Posterior cingulate gyrus (tissue), 11 donors: ENCODE measurements at regions of chr20 and their contacts with region 1.

Region 1: DNA sequence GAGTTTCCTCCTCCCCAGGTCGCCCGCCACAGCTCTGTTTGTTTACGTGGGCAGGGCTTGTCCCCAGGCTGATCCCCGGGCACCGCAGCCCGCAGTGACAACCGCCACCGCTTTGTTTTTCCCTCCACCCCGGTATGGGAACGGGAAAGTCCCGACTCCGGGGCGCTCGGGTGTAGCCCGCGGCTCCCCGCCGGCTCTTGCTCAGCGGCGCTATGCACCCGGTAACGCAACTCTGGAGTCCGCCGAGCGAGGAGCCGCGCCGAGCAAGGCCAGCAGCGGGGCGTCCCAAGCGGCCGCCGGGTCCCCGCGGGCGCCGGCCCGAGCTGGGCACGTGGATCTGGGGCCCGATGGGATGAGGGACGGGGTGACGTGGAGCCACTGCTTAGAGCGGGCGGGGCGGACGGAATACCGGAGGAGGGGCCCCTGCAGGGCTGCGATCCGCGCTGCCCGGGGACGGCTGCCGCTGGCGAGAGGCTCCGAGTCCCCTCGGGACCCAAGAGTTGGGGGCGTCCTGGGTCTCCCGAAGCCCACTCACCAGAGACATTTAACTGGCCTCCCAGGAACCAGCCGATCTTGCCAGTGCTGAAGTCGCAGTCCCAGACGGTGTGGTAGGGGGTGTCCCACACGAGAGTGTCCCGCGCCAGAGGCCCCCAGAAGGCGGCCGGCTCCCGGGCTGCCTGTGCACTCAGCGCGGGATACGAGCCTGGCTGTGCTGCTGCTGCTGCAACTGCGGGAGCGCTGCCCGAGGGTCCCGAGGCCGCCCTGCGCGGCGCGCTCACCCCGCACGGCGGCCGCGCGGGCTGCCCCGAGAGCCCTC is 497 bp downstream of the ACSS1 start:
- DNase-seq: peak; percentile 59 to 95 (median 70)

Region 2: DNA sequence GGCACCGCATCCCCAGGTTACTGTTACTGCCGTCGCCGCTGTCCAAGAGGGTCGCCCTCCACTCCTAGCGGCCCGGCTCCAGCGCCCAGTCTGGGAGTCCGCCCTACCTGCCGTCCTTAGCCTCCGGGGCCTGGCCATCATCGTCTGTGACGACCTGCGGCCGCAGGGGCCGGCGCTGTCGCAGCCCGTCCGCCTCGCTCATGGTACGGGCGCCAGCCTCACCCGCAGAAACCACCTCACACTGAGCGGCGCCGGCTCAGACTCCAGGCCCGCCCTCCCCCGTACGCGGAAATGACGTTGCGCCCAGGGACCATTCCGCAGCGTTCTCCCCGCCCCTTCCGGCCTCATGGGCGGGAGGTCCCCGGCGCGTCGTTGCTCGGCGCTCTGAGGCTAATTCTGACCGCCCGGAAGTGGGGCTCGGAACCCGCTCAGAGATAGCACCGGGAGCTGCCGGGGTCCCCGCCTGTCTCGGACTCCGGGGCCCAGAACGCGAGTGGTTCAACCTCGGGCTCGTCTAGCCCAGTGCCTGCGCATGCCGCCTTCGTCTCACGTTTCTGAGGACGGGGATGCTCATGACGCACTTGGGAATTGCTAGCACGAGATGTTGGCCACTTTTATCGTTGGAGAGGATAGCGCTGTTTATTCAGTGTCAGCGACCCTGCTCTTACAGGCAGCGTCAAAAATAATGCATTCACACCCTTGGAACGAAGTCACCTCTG is 64.8 kb before region 1 on chr20 and contains the start of gene APMAP:
- intact Hi-C with region 1: no loop called
- DNase-seq: peak; percentile 93 to 99 (median 97)

Region 3: GRCh38 chr20:25032478-25033280 is 24.8 kb before region 1 on chr20:
- intact Hi-C with region 1: loop called (anchors 2 kb)
- DNase-seq: peak; percentile 84 to 99 (median 92)

Region 4: DNA sequence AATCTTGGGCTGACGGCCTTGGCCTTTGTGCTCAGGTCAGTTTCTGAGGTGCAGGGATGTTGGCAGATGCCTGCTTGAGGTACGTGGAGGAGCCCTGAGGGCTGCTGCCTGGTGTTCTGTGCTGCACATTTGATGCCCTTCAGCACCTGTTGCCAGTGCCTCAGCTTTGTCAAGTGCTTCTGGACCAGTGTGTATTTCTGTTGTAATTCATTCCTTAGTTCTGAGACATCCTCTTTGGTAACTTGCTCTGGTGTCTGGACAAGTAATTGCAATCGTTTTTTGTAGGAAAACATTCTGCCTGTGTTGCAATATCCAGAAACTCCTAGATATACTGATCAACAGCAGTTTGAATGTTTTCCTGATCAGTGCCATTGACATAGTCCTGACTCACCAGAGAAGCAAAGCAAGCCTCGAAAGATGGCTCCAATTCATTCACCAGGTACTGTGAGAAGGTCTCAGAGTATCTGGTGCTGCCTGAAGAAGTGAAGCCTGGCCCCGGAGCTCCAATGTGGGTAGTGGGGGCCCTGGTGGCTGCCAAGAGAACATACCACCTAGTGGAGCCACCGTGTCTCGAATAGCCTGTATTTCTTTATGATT is 612.5 kb after region 1 on chr20:
- intact Hi-C with region 1: no loop called
- DNase-seq: no peak